ENCODE measurements at regions of chr5 and their contacts with region 1.

Region 1: GRCh38 chr5:137754126-137754960 is at the start of gene HNRNPA0:
- DNase-seq: peak; percentile 88 to 94
- H3K4me3 ChIP-seq: peak within 1 kb of the TSS; percentile 61
- H3K27ac ChIP-seq: peak within 1 kb of the TSS; percentile 91
- H3K4me1 ChIP-seq: peaks cover 43% of the 10 kb centered on the region
- H3K27me3 ChIP-seq: no peaks in the 10 kb centered on the region
- CTCF ChIP-seq: no peak
- total RNA-seq, gene HNRNPA0: 27.8 and 32.2 TPM in 2 replicates

Region 2: DNA sequence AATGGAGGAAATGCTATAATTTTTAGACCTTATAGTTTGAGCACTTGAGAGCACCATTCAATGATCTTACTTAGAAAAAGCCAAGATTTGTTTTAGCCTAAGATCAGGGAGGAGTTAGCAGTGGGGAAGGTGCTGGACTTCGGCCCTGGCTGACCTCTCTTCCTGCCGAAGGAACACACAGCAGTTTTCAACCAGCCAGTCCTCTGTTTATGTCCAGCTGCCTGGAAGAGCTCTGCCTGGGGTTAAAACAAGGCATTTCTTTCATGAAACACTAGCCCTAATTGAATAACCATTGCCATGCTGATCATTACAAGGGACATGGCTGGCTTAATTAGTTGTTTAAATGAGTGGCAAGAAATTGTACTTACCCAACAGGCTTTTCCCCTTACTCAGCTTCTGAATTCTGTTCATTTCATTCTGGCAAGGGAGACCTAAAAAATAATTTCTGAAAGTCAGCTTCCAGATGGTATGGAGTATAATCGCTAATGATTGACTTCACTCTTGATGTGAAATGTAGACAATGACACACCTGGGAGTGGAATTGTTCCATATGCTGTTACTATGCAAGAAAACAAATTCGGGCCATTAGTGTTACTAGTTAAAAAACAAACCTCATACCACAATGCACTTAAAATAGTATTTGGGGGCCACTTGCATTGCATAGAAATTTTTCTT is 769.4 kb before region 1 on chr5:
- CTCF ChIA-PET with region 1: no interaction called
- POLR2A ChIA-PET with region 1: no interaction called
- intact Hi-C with region 1: no loop called
- DNase-seq: no peak
- H3K4me3 ChIP-seq: no peak overlapping the region
- H3K27ac ChIP-seq: no peak overlapping the region
- H3K4me1 ChIP-seq: no peaks in the 10 kb centered on the region
- H3K27me3 ChIP-seq: no peaks in the 10 kb centered on the region
- CTCF ChIP-seq: no peak

Region 3: DNA sequence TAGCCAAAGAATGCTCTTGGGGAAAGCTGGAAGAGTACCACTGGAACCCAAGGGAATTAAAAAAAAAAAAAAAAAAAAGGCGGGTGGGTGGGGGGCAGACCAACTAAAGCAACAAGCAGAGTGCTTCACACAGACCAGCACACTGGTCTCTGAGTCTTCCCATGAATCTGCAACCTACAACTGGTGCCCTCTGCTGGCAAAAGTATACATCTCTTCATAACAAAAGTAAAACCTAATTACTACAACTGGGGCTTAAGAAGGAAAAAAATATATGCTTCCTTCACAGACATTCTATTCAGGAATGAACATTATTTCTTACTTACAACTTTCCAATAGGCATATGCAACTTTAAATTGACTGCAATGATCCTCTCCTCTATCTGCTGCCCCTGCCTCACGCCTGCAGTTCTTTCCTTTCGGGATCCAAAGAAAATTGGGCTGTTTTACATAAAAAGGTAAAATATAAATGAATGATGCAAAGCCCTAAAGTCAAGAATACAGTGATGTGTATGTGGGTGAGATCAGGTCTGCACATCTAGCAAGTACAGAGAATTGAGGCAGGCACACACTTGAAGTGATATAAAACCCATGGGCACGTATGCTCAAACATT is 11.2 kb before region 1 on chr5:
- CTCF ChIA-PET with region 1: interaction called, 14 read pairs
- POLR2A ChIA-PET with region 1: no interaction called
- intact Hi-C with region 1: no loop called
- DNase-seq: peak; percentile 31 to 52
- H3K4me3 ChIP-seq: no peak overlapping the region
- H3K27ac ChIP-seq: no peak overlapping the region
- H3K4me1 ChIP-seq: peaks cover 4% of the 10 kb centered on the region; the same call in 1 of the 2 replicates
- H3K27me3 ChIP-seq: no peaks in the 10 kb centered on the region
- CTCF ChIP-seq: peak; percentile 75

Region 4: GRCh38 chr5:138035605-138036537 is 281.5 kb after region 1 on chr5:
- CTCF ChIA-PET with region 1: interaction called, 3 read pairs
- POLR2A ChIA-PET with region 1: no interaction called
- intact Hi-C with region 1: loop called (anchors 2 kb)
- DNase-seq: peak; percentile 55 to 79
- H3K4me3 ChIP-seq: no peak overlapping the region
- H3K27ac ChIP-seq: no peak overlapping the region
- H3K4me1 ChIP-seq: peaks cover 20% of the 10 kb centered on the region
- H3K27me3 ChIP-seq: no peaks in the 10 kb centered on the region
- CTCF ChIP-seq: peak; percentile 87

Region 5: GRCh38 chr5:138128334-138128733 is 374.0 kb after region 1 on chr5:
- CTCF ChIA-PET with region 1: no interaction called
- POLR2A ChIA-PET with region 1: no interaction called
- intact Hi-C with region 1: loop called (anchors 2 kb)
- DNase-seq: no peak
- H3K4me3 ChIP-seq: no peak overlapping the region
- H3K27ac ChIP-seq: no peak overlapping the region
- H3K4me1 ChIP-seq: no peaks in the 10 kb centered on the region; the same call in 1 of the 2 replicates
- H3K27me3 ChIP-seq: no peaks in the 10 kb centered on the region
- CTCF ChIP-seq: no peak